CD8-positive, alpha-beta memory T cell (primary cell): ENCODE measurements at regions of chr7 and their contacts with region 1.

Region 1: GRCh38 chr7:117212969-117213877 is 109.6 kb downstream of the WNT2 start:
- DNase-seq: peak; percentile 5 to 56 (median 6)
- H3K4me3 ChIP-seq: no peak overlapping the region
- H3K4me3 Mint-ChIP-seq: no peak overlapping the region
- H3K27ac ChIP-seq: no peak overlapping the region
- H3K27ac Mint-ChIP-seq: no peak overlapping the region
- H3K4me1 ChIP-seq: no peaks in the 10 kb centered on the region
- H3K4me1 Mint-ChIP-seq: no peaks in the 10 kb centered on the region
- H3K27me3 ChIP-seq: no peaks in the 10 kb centered on the region
- H3K27me3 Mint-ChIP-seq: no peaks in the 10 kb centered on the region

Region 2: DNA sequence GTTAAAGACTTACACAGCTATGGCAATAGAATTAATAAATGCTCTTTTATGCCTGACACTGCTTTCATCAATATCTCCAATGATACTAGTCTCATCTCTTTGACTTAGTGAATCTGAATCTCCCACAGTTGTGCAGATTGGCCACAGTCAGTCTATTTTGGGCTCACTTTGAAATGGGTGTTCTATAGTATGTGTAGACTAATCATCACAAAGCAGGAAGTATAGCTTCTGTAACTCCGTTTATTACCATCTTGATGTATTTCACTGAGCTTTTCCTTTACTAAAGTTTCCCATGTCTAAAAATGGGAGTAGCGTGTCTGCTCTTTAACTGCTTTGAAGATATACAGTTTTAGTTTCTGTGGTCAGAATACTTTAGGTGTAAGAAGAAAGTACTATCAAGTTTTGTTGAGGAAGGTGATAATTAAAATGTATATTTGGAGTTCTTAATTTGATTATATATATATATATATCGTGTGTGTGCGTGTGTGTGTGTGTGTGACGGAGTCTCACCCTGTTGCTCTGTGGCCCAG is 189.8 kb before region 1 on chr7:
- CTCF ChIA-PET with region 1: no interaction called
- POLR2A ChIA-PET with region 1: no interaction called
- DNase-seq: no peak
- H3K4me3 ChIP-seq: no peak overlapping the region
- H3K4me3 Mint-ChIP-seq: no peak overlapping the region
- H3K27ac ChIP-seq: no peak overlapping the region
- H3K27ac Mint-ChIP-seq: no peak overlapping the region
- H3K4me1 ChIP-seq: no peaks in the 10 kb centered on the region
- H3K4me1 Mint-ChIP-seq: peaks cover 0 to 10% (median 10%) of the 10 kb centered on the region in 3 donors
- H3K27me3 ChIP-seq: no peaks in the 10 kb centered on the region
- H3K27me3 Mint-ChIP-seq: no peaks in the 10 kb centered on the region

Region 3: DNA sequence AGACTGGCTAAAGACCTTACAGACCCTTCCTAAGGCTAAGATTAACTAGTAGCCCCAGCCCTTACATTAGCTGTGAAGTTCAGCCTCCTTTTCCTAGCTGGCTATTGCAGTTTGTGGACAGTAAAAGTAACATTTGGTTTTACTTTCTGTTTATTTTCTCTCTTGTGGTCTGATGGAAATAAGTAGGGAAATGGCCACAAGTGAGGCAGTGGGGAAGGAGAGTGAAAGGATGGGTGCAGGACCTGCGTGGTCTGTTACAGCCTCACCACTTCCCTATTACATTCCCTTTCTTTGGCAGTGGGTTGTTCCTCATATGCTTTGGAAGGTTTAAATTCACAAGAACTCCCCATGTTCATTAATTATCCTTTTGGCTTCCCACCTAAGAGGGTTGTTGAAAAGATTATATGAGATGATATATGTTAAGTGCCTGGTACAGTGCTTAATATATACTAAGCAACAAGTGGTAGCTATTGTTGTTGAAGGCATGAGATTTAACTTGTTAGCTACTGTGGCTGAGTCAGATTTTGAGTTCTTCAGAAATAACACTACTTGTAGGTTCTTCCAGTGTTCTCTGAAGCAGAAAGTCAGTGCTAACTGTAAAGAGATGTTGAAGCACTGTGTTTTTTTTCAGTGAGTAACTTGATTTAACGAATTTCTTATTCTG is 78.2 kb before region 1 on chr7:
- CTCF ChIA-PET with region 1: no interaction called
- POLR2A ChIA-PET with region 1: no interaction called
- DNase-seq: no peak
- H3K4me3 ChIP-seq: no peak overlapping the region
- H3K4me3 Mint-ChIP-seq: no peak overlapping the region
- H3K27ac ChIP-seq: no peak overlapping the region
- H3K27ac Mint-ChIP-seq: peak overlapping the region in 3 of 8 donors; percentile 5 to 65 (median 8)
- H3K4me1 ChIP-seq: no peaks in the 10 kb centered on the region
- H3K4me1 Mint-ChIP-seq: peaks cover 7 to 10% (median 9%) of the 10 kb centered on the region in 3 donors
- H3K27me3 ChIP-seq: no peaks in the 10 kb centered on the region
- H3K27me3 Mint-ChIP-seq: no peaks in the 10 kb centered on the region

Region 4: DNA sequence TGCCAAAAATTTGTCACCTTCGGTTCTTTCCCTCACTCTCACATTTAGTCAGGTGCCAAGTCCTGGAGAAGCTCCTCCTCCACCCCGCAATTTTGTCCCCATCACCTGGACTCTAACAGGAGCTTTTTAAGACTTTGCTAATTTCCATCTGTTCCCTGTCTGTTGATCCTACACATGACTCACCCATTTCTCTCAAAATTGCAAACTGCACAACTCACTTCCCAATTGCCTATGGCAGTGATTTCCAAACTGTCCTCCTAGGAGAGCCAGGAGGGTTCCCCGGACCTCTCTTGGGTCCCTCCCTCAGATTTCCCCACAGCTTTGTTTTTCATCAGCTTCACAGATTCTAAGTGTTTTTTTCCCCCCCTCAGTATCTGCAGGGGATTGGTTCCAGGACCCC is 10.7 kb before region 1 on chr7:
- CTCF ChIA-PET with region 1: interaction called, 12 read pairs
- POLR2A ChIA-PET with region 1: no interaction called
- DNase-seq: no peak
- H3K4me3 ChIP-seq: no peak overlapping the region
- H3K4me3 Mint-ChIP-seq: no peak overlapping the region
- H3K27ac ChIP-seq: no peak overlapping the region
- H3K27ac Mint-ChIP-seq: no peak overlapping the region
- H3K4me1 ChIP-seq: no peaks in the 10 kb centered on the region
- H3K4me1 Mint-ChIP-seq: no peaks in the 10 kb centered on the region
- H3K27me3 ChIP-seq: no peaks in the 10 kb centered on the region
- H3K27me3 Mint-ChIP-seq: peaks cover 0 to 1% of the 10 kb centered on the region in 2 donors

Region 5: GRCh38 chr7:117285826-117286225 is 72.6 kb after region 1 on chr7:
- CTCF ChIA-PET with region 1: no interaction called
- POLR2A ChIA-PET with region 1: no interaction called
- DNase-seq: no peak
- H3K4me3 ChIP-seq: no peak overlapping the region
- H3K4me3 Mint-ChIP-seq: no peak overlapping the region
- H3K27ac ChIP-seq: no peak overlapping the region
- H3K27ac Mint-ChIP-seq: no peak overlapping the region
- H3K4me1 ChIP-seq: no peaks in the 10 kb centered on the region
- H3K4me1 Mint-ChIP-seq: no peaks in the 10 kb centered on the region
- H3K27me3 ChIP-seq: no peaks in the 10 kb centered on the region
- H3K27me3 Mint-ChIP-seq: peaks cover 0 to 1% of the 10 kb centered on the region in 2 donors